ENCODE measurements at regions of chr22 and their contacts with region 1.

Region 1: GRCh38 chr22:19971276-19972124 is 29.9 kb upstream of the TXNRD2 start:
- DNase-seq: no peak
- ATAC-seq: peak; percentile 1

Region 2: DNA sequence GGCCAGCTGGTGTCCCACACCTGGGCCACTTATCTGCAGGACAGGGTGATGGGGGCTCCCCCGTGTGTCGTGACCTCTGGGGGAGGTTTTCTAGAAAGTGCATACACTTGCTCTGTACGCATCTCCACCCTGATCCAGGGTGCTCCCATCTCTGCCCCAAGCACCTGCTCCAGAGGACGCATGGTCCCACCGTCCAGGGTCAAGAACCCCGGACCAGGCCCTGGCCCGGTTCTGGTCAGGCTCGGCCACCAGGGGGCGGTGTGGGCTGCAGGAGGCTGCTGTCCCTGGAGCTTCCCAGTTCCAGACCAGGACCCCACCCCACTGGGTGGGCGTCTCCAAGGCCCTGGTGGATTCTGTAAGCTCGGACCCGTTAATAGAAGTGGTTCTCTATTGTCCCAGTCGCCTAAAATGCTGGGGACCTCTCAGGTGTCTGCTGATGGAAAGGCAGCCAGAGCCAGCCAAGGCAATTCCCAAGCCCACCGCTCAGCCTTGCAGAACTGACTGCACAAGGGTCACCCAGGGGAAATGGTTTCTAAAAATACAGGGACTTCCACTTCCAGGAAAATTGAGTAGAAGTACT is 291.9 kb before region 1 on chr22:
- intact Hi-C with region 1: no loop called
- DNase-seq: peak; percentile 82
- ATAC-seq: peak; percentile 88

Region 3: DNA sequence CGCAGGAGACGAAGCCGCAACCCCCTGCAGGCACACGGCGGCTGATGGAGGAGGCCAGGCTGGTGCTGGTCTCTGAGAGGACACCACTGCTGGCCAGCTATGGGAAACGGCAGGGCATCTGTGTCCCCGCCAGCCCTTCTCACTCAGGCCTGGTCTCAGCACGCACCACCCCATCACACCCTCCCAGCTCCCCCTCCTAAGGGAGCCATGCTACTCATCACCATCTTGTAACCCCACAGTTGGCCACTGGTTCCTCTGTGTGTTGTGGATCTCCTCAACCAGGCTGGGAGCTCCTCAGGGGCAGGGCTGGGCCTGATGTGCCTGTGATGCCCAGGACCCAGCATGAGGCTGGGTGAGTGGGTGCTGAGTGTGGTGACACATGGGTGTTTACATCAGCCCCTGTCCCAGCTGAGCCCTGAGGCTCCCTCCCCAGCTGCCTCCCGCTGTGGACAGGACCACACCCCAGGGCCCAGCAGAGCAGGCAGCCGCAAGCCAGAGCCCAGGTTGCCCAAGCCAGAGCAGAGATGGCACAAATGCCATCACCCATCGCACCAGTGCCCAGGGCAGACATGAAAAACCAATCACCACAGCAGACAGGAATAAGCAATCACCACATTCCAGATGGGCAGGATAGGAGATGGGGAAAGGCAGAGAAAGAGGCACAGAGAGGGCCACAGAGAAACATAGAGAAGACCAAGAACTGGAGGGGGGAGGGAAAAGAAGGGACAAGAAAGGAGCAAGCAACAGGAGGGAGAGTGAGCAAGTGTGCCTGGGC is 36.9 kb after region 1 on chr22:
- intact Hi-C with region 1: loop called (anchors 2 kb)
- DNase-seq: no peak
- ATAC-seq: no peak

Region 4: DNA sequence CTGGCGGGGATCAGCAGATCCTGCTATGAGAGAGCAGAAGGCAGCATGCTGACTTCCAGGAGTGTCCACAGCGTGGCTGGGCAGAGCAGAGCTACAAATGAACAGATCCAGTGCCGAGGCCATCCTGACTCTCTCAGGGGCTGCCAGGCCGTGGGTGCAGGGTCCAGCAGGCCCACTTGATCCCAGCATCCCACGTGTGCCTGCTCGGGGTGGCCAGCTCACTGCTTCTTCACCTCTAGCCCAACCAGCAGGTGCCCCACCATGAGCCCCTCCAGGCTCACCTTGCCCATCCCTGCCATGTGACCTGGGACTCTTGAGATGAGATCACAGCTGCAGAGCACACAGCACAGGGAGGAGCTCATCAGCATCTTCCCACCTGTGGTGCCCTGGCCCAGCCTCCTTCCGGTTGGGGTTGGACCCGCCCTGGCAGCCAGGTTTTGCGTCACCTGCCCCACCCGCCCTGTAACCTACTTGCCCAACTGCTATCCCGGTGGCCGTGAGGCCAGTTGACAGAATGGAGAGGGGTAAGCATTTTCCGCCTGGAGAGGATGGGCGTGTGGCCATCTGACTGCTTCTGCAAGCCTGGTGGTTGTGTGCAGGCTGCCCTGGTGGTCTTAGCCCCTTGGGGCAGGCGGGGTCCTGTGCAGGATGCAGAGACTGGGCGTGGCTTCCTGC is 60.4 kb after region 1 on chr22:
- intact Hi-C with region 1: no loop called
- DNase-seq: no peak
- ATAC-seq: no peak

Measured in sciatic nerve (tissue), 2 donors.